Posterior cingulate gyrus (tissue), 11 donors: ENCODE measurements at regions of chr11 and their contacts with region 1.

Region 1: GRCh38 chr11:124961972-124962609 is 8.1 kb downstream of the CCDC15 start:
- DNase-seq: no peak

Region 2: GRCh38 chr11:125141686-125142535 is 179.8 kb after region 1 on chr11:
- intact Hi-C with region 1: loop called (anchors 1 kb)
- DNase-seq: peak in 8 of 10 donors; percentile 38 to 91 (median 58)

Region 3: GRCh38 chr11:125345421-125346178 is 383.5 kb after region 1 on chr11:
- intact Hi-C with region 1: loop called (anchors 5 kb)
- DNase-seq: peak; percentile 62 to 93 (median 76)